Left cardiac atrium (tissue), 4 donors: ENCODE measurements at regions of chr11 and their contacts with region 1.

Region 1: GRCh38 chr11:71086675-71087258 is 165.6 kb downstream of the SHANK2 start:
- DNase-seq: no peak
- ATAC-seq: peak in 1 of 2 donors; percentile 38

Region 2: DNA sequence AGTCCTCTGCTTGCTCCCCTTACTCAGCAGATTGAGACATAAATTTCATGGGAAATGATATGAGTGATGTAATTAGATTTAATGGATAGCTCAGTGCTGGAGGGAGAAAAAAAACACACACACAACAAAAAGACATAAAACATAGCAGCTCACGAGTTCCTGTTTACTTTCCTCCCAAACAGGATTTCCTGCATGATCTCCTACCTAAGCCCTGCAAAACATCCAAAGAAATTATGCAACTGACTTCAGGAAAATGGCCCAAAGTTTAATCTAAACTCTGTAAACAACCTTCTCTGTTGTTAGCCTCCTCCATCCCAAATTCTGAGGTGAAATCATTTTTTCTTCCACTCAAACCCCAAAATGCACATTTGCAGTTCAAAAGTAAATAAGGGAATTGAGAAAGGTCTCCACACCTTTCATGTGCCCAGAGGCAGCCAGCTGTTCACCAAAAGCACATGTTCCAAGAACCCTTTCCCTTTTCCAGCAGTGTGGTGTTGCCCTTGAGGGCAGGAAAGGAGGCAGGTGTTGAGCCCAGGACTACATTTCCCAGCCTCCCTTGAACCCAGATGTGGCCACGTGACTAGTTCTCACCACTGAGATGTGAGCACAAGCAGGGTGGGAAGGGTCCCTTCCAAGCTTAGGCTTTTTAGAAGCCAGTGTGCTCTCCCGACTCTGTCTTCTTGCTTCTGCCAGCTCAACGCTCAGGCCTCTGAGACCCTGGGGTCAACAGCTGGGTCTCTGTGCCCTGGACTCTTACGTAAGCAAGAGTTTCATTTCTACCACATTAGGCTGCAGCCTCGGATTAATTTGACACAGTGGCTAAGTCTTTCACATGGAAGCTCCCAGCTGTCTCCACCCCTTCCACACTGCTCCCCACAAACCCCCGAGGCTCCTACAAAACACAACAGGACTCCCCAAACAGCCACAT is 387.2 kb before region 1 on chr11:
- intact Hi-C with region 1: no loop called
- DNase-seq: no peak
- ATAC-seq: no peak

Region 3: GRCh38 chr11:71251761-71252443 is 165.1 kb after region 1 on chr11:
- intact Hi-C with region 1: no loop called
- DNase-seq: no peak
- ATAC-seq: no peak

Region 4: GRCh38 chr11:71420455-71421241 is 333.9 kb after region 1 on chr11:
- intact Hi-C with region 1: loop called in 1 of 2 experiments (anchors 5 kb)
- DNase-seq: no peak
- ATAC-seq: peak; percentile 19 to 62